CD8-positive, alpha-beta T cell (primary cell): ENCODE measurements at regions of chr1 and their contacts with region 1.

Region 1: DNA sequence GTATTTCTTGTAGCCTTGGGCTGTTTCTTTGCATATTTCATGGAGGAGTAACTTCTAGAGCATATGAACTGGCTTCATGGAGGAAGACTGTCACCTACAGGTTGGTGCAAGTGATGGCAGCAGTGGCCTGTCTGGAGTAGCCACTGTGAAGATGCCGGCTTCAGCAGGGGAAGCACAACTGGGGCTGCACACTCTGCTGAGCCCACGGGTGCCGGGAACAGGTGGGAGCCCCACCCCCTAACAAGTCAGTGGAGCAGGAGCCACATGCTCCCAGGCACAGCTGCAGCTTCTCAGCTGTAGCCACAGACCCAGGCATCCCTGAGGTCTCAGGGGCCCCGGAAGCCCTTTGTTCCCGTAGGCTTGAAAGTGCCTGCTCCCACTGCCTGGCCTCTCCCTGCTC is 43.2 kb upstream of the C1orf185 start:
- DNase-seq: peak in 2 of 9 experiments; percentile 25 to 46
- ATAC-seq: no peak
- H3K4me3 ChIP-seq: no peak overlapping the region
- H3K4me3 Mint-ChIP-seq: no peak overlapping the region
- H3K27ac ChIP-seq: no peak overlapping the region
- H3K27ac Mint-ChIP-seq: no peak overlapping the region
- H3K4me1 ChIP-seq: no peaks in the 10 kb centered on the region
- H3K4me1 Mint-ChIP-seq: no peaks in the 10 kb centered on the region
- H3K27me3 ChIP-seq: no peaks in the 10 kb centered on the region
- H3K27me3 Mint-ChIP-seq: peaks cover 17% of the 10 kb centered on the region
- CTCF ChIP-seq: no peak

Region 2: GRCh38 chr1:50929376-50929958 is 129.4 kb before region 1 on chr1:
- CTCF ChIA-PET with region 1: interaction called, 5 read pairs
- POLR2A ChIA-PET with region 1: no interaction called
- intact Hi-C with region 1: loop called in 1 of 2 experiments (anchors 5 kb)
- DNase-seq: peak in 2 of 9 experiments; percentile 30 to 50
- ATAC-seq: no peak
- H3K4me3 ChIP-seq: no peak overlapping the region
- H3K4me3 Mint-ChIP-seq: no peak overlapping the region
- H3K27ac ChIP-seq: no peak overlapping the region
- H3K27ac Mint-ChIP-seq: no peak overlapping the region
- H3K4me1 ChIP-seq: no peaks in the 10 kb centered on the region
- H3K4me1 Mint-ChIP-seq: peaks cover 29% of the 10 kb centered on the region
- H3K27me3 ChIP-seq: no peaks in the 10 kb centered on the region
- H3K27me3 Mint-ChIP-seq: no peaks in the 10 kb centered on the region
- CTCF ChIP-seq: peak; percentile 71